ENCODE measurements at regions of chr7 and their contacts with region 1.

Region 1: DNA sequence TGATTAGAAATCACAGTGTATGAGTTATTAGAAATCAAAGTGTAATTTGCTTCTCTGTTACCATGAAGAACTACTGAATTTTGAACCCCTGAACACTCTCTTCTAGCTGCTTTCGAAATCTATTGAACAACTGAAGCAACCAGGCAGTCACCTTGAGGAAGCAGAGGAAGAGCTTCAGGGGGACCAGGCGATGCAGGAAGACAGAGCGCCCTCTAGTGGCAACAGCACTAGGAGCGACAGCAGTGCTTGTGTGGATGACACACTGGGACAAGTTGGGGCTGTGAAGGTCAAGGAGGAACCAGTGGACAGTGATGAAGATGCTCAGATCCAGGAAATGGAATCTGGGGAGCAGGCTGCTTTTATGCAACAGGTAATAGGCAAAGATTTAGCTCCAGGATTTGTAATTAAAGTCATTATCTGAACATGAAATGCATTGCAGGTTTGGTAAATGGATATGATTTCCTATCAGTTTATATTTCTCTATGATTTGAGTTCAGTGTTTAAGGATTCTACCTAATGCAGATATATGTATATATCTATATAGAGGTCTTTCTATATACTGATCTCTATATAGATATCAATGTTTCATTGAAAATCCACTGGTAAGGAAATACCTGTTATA is 170.7 kb downstream of the HDAC9 start:
- DNase-seq: peak; percentile 55
- ATAC-seq: peak; percentile 94
- H3K4me3 Mint-ChIP-seq: no peak overlapping the region
- H3K27ac Mint-ChIP-seq: peak overlapping the region; percentile 10
- H3K4me1 Mint-ChIP-seq: peaks cover 9% of the 10 kb centered on the region
- H3K27me3 Mint-ChIP-seq: no peaks in the 10 kb centered on the region
- CTCF ChIP-seq: peak; percentile 99

Region 2: GRCh38 chr7:17706734-17707133 is 959.5 kb before region 1 on chr7:
- CTCF ChIA-PET with region 1: no interaction called
- POLR2A ChIA-PET with region 1: no interaction called
- intact Hi-C with region 1: loop called (anchors 10 kb)
- DNase-seq: no peak
- ATAC-seq: no peak
- H3K4me3 Mint-ChIP-seq: no peak overlapping the region
- H3K27ac Mint-ChIP-seq: no peak overlapping the region
- H3K4me1 Mint-ChIP-seq: no peaks in the 10 kb centered on the region
- H3K27me3 Mint-ChIP-seq: peaks cover 6% of the 10 kb centered on the region
- CTCF ChIP-seq: no peak

Region 3: GRCh38 chr7:18357691-18358090 is 308.5 kb before region 1 on chr7:
- CTCF ChIA-PET with region 1: interaction called, 186 read pairs
- POLR2A ChIA-PET with region 1: interaction called, 5 read pairs
- intact Hi-C with region 1: loop called (anchors 1 kb)
- DNase-seq: no peak
- ATAC-seq: peak; percentile 40
- H3K4me3 Mint-ChIP-seq: no peak overlapping the region
- H3K27ac Mint-ChIP-seq: no peak overlapping the region
- H3K4me1 Mint-ChIP-seq: peaks cover 29% of the 10 kb centered on the region
- H3K27me3 Mint-ChIP-seq: no peaks in the 10 kb centered on the region
- CTCF ChIP-seq: no peak

Region 4: DNA sequence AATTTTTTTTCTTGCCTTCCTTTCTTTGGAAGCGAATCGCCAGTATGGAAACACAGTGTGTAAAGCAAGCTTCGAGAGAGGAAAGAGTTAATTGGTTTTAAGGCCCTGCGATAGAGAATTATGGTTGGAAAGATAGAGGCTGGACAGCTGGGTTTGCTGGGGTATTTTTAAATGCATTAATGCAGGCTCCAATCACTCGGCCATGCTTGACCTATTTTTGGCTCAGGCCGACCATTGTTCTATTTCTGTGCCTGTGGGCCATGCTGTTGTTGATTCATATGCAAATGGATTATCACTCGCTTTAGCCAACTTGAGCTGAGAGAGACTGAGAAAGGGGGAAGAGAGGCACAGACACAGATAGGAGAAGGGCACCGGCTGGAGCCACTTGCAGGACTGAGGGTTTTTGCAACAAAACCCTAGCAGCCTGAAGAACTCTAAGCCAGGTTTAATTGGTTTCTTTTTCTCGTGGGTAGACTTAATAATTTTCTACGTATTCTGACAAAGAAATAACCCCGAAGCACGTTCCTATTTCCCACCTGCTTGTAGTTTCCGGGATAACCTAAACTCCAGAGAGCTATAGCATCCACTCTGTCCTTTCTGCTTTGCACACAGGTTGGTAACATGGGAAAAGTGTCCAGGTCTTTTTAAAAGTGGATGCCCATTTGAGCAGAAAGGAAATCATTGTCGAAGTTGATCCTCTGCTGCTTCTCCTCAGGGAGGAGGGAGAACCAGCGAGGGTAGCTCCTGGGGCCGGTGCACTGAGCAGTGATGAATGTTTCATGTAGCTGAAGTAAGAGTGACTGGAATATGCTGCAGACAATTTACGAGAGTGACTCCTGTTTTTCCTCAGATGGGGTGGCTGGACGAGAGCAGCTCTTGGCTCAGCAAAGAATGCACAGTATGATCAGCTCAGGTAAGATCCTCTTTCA is 170.5 kb before region 1 on chr7 and contains the start of gene HDAC9:
- CTCF ChIA-PET with region 1: interaction called, 8 read pairs
- POLR2A ChIA-PET with region 1: no interaction called
- intact Hi-C with region 1: loop called (anchors 5 kb)
- DNase-seq: peak; percentile 33
- ATAC-seq: peak; percentile 88
- H3K4me3 Mint-ChIP-seq: peak within 1 kb of the TSS; percentile 95
- H3K27ac Mint-ChIP-seq: peak within 1 kb of the TSS; percentile 95
- H3K4me1 Mint-ChIP-seq: peaks cover 53% of the 10 kb centered on the region
- H3K27me3 Mint-ChIP-seq: no peaks in the 10 kb centered on the region
- CTCF ChIP-seq: no peak
- total RNA-seq, gene HDAC9: 136 and 149 TPM in 2 replicates

Region 5: DNA sequence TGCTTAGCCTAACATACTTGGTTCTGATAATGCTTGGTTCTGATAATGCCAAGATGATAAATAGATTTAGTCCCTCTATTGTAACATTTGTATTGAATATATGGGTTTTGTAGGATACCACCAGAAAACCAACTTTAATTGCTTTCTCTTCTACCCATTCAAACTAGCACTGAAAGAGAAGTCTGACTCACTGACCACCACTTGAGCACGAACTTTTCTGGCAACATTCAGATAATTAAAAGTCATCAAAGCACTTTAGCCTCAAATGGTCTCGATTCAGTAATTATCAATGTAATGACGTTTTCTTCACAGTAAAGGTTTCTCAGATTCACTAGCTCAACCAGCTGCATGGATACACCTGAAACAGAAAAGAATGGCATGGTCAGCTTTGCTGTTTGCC is 107.7 kb before region 1 on chr7:
- CTCF ChIA-PET with region 1: no interaction called
- POLR2A ChIA-PET with region 1: no interaction called
- intact Hi-C with region 1: no loop called
- DNase-seq: no peak
- ATAC-seq: peak; percentile 31
- H3K4me3 Mint-ChIP-seq: no peak overlapping the region
- H3K27ac Mint-ChIP-seq: peak overlapping the region; percentile 43
- H3K4me1 Mint-ChIP-seq: peaks cover 49% of the 10 kb centered on the region
- H3K27me3 Mint-ChIP-seq: no peaks in the 10 kb centered on the region
- CTCF ChIP-seq: no peak

Region 6: DNA sequence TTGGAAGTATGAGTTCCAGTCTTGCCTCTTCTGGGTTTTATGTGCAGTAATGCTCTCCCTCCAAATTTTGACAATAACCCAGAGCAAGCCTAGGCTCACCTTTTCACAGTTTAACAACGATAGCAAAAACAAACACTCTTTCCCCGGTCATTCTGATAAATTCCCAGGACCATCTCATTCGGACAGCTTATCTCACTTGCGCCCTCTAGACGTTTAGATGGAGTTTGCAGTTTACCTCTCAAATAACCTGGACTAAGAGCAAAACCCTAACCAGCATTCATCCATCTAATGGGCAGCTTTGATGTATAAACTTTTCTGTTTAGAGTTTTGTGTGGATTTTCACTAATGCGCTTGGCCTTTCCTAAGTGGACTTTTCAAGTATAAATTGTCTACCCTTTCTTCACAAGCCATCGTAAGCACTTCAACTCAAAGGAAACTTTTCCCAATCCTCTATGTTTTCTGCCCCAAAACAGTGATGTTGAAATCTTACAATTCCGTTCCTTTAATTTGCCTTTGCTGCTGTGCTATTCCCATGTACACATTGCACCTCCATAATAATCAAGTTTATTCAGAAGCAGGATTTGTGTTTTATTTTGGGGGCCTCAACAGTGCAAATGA is 55.8 kb before region 1 on chr7:
- CTCF ChIA-PET with region 1: interaction called, 7 read pairs
- POLR2A ChIA-PET with region 1: no interaction called
- intact Hi-C with region 1: loop called (anchors 5 kb)
- DNase-seq: no peak
- ATAC-seq: peak; percentile 37
- H3K4me3 Mint-ChIP-seq: no peak overlapping the region
- H3K27ac Mint-ChIP-seq: no peak overlapping the region
- H3K4me1 Mint-ChIP-seq: peaks cover 4% of the 10 kb centered on the region
- H3K27me3 Mint-ChIP-seq: no peaks in the 10 kb centered on the region
- CTCF ChIP-seq: no peak

Region 7: GRCh38 chr7:19051767-19052375 is 385.7 kb after region 1 on chr7:
- CTCF ChIA-PET with region 1: interaction called, 3 read pairs
- POLR2A ChIA-PET with region 1: no interaction called
- intact Hi-C with region 1: loop called (anchors 5 kb)
- DNase-seq: no peak
- ATAC-seq: peak; percentile 66
- H3K4me3 Mint-ChIP-seq: no peak overlapping the region
- H3K27ac Mint-ChIP-seq: no peak overlapping the region
- H3K4me1 Mint-ChIP-seq: no peaks in the 10 kb centered on the region
- H3K27me3 Mint-ChIP-seq: no peaks in the 10 kb centered on the region
- CTCF ChIP-seq: peak; percentile 39